ENCODE measurements at regions of chr16 and their contacts with region 1.

Region 1: GRCh38 chr16:72371307-72372086 is 199.5 kb upstream of the PMFBP1 start:
- DNase-seq: peak; percentile 97
- H3K4me3 ChIP-seq: no peak overlapping the region
- H3K27ac ChIP-seq: peak overlapping the region; percentile 71
- H3K4me1 ChIP-seq: peaks cover 21% of the 10 kb centered on the region
- H3K27me3 ChIP-seq: no peaks in the 10 kb centered on the region
- CTCF ChIP-seq: no peak
- POLR2A ChIP-seq: peak; percentile 33

Region 2: DNA sequence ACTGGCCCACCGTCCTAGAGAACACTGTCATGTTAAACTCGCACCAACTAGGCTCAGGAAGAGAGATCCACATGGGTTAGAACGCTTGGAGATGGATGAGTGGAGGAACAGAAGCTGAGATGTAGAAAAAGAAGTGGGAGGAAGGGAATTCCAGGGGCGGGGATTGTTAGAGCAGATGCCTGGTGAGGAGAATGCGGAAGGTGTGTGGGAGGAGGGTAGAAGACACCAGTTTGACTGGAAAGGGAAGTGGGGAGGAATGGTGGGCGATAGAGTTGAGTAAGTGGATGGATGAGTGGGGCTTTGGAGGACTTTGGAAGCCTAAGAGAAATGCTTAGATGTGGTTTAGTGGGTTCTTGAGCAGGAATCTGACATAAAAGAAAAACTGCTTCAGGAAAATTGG is 240.5 kb before region 1 on chr16:
- CTCF ChIA-PET with region 1: no interaction called
- POLR2A ChIA-PET with region 1: no interaction called
- dilution Hi-C with region 1: no loop called
- intact Hi-C with region 1: no loop called
- DNase-seq: no peak
- H3K4me3 ChIP-seq: no peak overlapping the region
- H3K27ac ChIP-seq: no peak overlapping the region
- H3K4me1 ChIP-seq: no peaks in the 10 kb centered on the region
- H3K27me3 ChIP-seq: peaks cover 0 to 3% of the 10 kb centered on the region in 2 experiments
- CTCF ChIP-seq: no peak
- POLR2A ChIP-seq: no peak

Region 3: GRCh38 chr16:72234387-72234786 is 137.1 kb before region 1 on chr16:
- CTCF ChIA-PET with region 1: no interaction called
- POLR2A ChIA-PET with region 1: no interaction called
- dilution Hi-C with region 1: no loop called
- intact Hi-C with region 1: no loop called
- DNase-seq: no peak
- H3K4me3 ChIP-seq: no peak overlapping the region
- H3K27ac ChIP-seq: no peak overlapping the region
- H3K4me1 ChIP-seq: no peaks in the 10 kb centered on the region
- H3K27me3 ChIP-seq: no peaks in the 10 kb centered on the region
- CTCF ChIP-seq: no peak
- POLR2A ChIP-seq: no peak

Region 4: GRCh38 chr16:72764015-72764654 is 392.6 kb after region 1 on chr16:
- CTCF ChIA-PET with region 1: no interaction called
- POLR2A ChIA-PET with region 1: no interaction called
- dilution Hi-C with region 1: no loop called
- intact Hi-C with region 1: loop called (anchors 10 kb)
- DNase-seq: no peak
- H3K4me3 ChIP-seq: no peak overlapping the region
- H3K27ac ChIP-seq: no peak overlapping the region
- H3K4me1 ChIP-seq: no peaks in the 10 kb centered on the region
- H3K27me3 ChIP-seq: no peaks in the 10 kb centered on the region
- CTCF ChIP-seq: no peak
- POLR2A ChIP-seq: no peak